ENCODE measurements at regions of chr11 and their contacts with region 1.

Region 1: DNA sequence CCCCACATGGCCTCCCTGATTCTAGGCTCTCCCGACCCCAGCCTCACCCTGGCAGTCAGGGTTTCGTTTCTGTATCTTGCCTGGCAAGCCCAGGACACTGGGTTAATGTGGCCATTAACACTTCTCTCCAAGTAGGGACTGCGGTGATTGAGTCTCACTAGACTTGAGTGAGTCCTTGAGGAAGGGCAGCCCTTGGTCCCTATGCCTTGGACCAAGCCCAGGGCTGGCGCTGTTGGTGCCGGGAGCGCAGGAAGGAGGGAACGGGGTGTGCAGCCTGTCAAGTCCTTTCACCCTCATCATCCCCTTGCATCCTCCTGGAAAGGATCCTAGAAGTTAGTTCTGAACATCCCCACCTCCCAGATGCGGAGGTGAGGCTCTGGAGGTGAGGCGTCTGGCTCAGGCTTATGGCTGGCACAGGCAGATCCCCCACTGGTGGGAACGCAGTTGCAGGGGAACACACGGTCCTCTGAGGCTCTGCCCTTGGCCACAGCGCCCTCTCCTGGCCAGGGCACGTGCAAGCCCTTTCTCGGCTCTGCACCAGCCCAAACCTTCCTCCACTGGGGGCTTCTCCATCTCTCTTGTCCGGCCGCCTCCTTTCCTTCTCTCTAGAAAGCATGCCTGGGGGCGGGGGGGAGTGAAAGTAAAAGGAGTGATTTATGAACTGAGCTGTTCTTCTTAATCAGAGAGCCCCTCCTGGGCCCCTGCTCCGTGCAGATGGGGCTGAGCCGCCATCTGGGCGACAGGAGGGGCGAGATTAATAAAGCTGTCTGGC is 56.7 kb downstream of the TP53I11 start:
- DNase-seq: peak; percentile 53
- H3K4me3 ChIP-seq: no peak overlapping the region
- H3K27ac ChIP-seq: no peak overlapping the region
- H3K27me3 ChIP-seq: peaks cover 29% of the 10 kb centered on the region
- CTCF ChIP-seq: peak; percentile 99

Region 2: DNA sequence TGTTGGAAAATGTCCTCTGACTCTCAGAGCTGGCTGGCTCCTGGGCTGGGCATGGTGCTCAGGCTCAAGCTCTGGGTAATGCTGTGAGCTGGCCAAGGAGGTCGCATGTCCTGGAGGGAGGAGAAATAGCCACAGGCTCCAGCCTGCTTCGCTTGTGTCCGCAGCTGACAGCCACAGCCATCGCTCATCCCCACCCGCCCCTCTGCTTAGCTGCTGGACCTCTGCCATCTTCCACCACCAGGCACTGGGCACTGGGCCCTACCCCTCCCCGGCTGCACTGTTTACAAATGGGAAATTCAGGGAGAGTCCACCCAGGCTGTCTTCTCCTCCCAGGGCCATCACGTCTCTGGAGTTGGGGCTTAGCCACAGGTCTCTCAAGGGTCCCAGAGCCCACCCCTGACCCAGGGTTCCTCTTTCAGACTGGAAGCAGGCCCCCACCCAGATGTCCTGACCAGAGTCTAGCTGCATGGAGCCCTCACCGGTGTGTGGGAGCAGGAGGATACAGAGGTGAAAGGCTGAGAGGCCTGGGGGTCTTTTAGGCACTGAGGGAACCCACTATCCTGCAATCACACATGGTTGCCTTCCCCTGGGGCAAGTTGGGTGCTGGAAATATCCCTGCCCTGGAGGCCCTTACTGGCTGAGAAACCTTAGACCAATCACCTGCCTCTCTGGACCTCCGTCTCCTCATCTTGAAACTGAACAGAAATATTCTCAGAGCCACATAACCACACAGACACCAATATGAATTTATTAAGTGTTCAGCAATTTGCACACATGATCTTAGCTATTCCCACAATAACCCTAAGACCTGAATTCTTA is 265.9 kb before region 1 on chr11:
- CTCF ChIA-PET with region 1: interaction called, 57 read pairs
- POLR2A ChIA-PET with region 1: no interaction called
- DNase-seq: no peak
- H3K4me3 ChIP-seq: no peak overlapping the region
- H3K27ac ChIP-seq: no peak overlapping the region
- H3K27me3 ChIP-seq: peaks cover 2% of the 10 kb centered on the region
- CTCF ChIP-seq: no peak

Region 3: DNA sequence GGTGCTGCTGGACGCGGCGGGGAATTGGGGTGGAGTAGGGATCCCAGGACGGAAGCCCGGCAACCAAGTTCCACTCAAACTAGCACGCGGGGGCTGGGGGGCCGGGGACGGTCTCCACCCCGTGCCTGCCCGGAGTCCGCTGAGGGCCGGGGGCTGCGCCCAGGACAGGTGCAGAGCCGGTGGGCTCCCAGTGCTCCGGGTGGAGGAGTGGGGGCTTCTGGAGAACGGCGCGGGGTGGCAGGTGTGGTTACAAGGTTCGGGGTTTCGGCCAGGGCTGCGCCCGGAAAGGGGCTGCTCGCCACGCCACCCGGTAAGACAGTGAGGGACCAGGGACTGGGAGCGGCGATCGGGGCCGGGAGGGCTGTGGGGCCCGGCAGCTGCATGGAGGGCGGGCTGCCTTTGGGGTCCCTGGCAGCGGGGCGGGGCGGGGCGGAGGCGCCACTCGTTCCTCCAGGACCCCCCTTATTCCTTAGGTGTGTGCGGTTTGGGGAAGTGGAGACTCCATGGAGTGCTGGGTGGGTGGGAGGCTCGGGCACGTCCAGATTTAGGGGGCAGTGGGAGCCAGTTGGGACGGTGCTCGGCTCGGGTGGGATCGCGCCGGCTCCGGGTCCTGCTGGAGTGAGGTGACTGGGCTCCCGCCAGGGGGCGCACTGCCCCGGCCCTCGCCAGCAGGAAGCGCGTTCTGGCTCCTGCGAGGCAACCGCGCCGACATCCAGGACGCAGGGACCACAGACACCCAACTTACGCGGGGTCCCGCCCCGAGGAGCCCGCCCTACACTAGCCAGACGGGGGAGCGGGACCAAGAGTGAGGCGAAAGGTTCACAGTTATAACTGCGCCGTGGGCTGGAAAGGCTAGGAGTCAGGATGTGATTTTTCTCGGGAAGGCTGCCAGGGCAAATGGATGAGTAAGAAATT is 166.4 kb before region 1 on chr11:
- CTCF ChIA-PET with region 1: interaction called, 24 read pairs
- POLR2A ChIA-PET with region 1: no interaction called
- DNase-seq: peak; percentile 26
- H3K4me3 ChIP-seq: peak overlapping the region; percentile 56
- H3K27ac ChIP-seq: no peak overlapping the region
- H3K27me3 ChIP-seq: peaks cover 56% of the 10 kb centered on the region
- CTCF ChIP-seq: peak; percentile 88

Region 4: GRCh38 chr11:45518141-45518832 is 624.3 kb after region 1 on chr11:
- CTCF ChIA-PET with region 1: no interaction called
- POLR2A ChIA-PET with region 1: no interaction called
- DNase-seq: no peak
- H3K4me3 ChIP-seq: no peak overlapping the region
- H3K27ac ChIP-seq: no peak overlapping the region
- H3K27me3 ChIP-seq: no peaks in the 10 kb centered on the region
- CTCF ChIP-seq: no peak